ENCODE measurements at regions of chr12 and their contacts with region 1.

Region 1: GRCh38 chr12:110124184-110124995 is at the start of gene IFT81:
- DNase-seq: peak; percentile 98
- ATAC-seq: peak; percentile 91
- H3K4me3 Mint-ChIP-seq: peak within 1 kb of the TSS; percentile 83
- H3K27ac Mint-ChIP-seq: peak within 1 kb of the TSS; percentile 81
- H3K4me1 Mint-ChIP-seq: peaks cover 7% of the 10 kb centered on the region
- H3K27me3 Mint-ChIP-seq: peaks cover 4% of the 10 kb centered on the region
- total RNA-seq, gene IFT81: 3.5 TPM

Region 2: DNA sequence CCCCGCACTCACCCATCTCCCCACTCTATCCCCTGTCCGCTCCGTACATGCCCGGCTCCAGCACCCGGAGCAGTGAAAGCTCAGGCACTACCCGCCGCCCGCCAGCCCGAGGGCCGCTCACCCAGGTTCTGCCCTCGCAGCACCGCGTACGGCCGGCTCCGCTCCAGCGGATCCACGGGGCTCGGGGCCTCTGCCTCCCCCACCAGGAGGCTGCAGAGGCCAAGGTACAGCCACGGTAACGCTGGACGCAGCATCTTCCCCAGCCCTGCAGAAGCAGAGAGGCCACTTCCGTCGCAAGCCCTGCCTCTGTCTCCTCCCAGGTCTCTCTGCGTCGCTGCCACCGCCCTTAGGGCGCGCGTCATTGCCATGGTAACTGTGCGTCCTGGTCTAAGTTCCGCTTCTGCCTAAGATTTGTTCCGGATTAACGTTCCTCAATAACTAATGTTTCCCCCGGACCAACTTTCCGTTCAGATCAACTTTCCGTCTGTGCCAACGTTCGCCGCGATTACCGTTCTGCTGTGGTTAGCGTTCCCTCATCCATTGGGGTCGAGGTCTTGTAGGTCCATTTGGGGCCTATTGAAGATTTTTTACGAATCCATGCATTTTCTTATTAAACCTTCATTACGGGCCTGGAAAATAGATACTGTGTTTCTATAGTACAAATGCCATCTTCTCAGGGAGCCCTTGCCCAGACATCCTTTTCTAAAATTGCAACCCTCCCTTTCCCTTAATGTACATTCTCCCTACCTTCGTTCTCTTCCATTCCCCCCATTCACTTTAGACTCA is 76.0 kb before region 1 on chr12 and contains the start of gene C12orf76:
- CTCF ChIA-PET with region 1: no interaction called
- POLR2A ChIA-PET with region 1: no interaction called
- intact Hi-C with region 1: loop called in 1 of 2 experiments (anchors 1 kb)
- DNase-seq: peak; percentile 95
- ATAC-seq: peak; percentile 100
- H3K4me3 Mint-ChIP-seq: peak within 1 kb of the TSS; percentile 78
- H3K27ac Mint-ChIP-seq: peak within 1 kb of the TSS; percentile 94
- H3K4me1 Mint-ChIP-seq: peaks cover 28% of the 10 kb centered on the region
- H3K27me3 Mint-ChIP-seq: no peaks in the 10 kb centered on the region
- total RNA-seq, gene C12orf76: 10.2 to 10.5 TPM

Region 3: DNA sequence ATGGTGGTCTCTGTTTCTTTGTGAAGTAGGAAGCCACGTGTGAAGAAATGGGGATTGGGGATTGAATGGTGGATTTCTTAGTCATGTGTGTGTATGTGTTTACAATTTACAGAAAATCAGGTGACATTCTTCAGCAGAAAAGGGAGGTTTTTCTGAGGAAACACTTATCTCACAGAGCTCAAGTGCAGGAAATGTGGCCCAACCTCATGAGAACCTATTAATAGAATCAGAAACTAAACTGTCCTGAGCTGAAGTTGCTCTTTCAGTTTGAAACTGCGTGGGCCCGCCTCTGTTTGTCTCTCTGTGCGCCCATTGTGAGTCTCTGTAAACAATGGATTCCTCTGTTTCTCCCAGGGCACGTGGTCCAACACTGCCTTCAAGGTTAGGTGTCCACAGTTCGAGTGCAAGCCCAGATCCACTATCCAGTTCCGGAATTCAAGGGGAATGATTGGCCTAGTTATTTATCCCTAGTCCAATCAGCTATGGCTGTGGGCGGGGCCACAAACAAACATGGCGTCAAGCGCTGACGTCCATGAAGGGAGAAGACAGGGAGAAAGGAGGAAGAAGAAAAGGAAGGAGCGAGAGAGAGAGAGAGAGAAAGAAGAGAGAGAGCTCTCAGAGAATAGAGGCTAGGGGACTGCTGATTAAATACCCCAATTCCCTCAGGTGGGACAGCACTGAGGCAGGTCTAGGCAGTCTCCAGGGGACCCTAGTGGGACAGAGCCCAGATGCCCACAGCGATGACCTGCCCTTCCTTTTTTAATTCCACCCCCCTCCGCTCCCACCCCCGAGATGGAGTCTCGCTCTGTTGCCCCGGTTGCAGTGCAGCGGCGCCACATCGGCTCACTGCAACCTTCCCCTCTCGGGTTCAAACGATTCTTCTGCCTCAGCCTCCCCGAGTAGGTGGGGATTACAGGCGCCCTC is 44.7 kb before region 1 on chr12:
- CTCF ChIA-PET with region 1: no interaction called
- POLR2A ChIA-PET with region 1: interaction called, 3 read pairs
- intact Hi-C with region 1: loop called in 1 of 2 experiments (anchors 2 kb)
- DNase-seq: peak; percentile 83
- ATAC-seq: peak; percentile 91
- H3K4me3 Mint-ChIP-seq: peak overlapping the region; percentile 57
- H3K27ac Mint-ChIP-seq: peak overlapping the region; percentile 94
- H3K4me1 Mint-ChIP-seq: peaks cover 30% of the 10 kb centered on the region
- H3K27me3 Mint-ChIP-seq: no peaks in the 10 kb centered on the region

Region 4: DNA sequence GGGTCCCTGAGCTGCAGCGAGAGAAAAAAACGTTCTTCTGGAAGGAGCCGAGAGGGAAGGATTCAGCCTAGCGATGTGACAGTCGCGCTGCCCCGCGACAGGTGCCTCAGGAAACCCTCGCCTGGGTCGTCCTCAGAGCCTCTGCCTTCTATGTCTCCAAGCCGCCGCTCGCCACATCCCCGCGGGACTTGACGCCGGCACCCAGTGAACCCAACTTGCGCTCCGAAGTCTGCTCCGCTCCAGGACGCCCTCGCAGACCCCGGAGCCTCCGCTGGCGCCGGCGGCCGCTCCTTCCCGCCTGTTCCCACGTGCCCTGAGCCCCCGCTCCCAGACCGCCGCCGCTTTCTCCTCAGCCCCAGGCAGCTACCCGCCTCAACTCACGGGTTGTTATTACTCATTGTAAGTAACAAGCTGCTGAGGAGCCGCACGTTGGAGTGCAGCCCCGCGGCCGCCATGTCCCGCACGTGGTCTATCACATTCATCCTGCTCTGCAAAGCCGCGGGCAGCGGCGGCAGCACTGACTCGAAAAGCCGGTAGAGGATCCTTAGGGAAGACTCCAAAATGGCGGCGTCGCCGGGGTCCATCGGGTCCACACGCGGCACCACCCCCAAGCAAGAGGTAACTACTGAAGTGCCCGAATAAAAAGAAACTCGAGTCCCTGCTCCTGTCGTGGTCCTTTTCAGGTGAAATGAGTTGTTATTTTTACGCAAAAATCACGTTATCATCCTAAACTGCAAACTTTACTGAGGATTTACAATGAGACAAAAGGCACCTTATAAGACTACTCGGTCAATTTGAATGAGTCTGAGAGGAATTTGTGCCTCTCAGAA is 279.0 kb after region 1 on chr12 and contains the start of gene ANAPC7:
- CTCF ChIA-PET with region 1: no interaction called
- POLR2A ChIA-PET with region 1: no interaction called
- intact Hi-C with region 1: loop called in 1 of 2 experiments (anchors 1 kb)
- DNase-seq: peak; percentile 93
- ATAC-seq: peak; percentile 94
- H3K4me3 Mint-ChIP-seq: peak within 1 kb of the TSS; percentile 88
- H3K27ac Mint-ChIP-seq: peak within 1 kb of the TSS; percentile 99
- H3K4me1 Mint-ChIP-seq: peaks cover 21% of the 10 kb centered on the region
- H3K27me3 Mint-ChIP-seq: no peaks in the 10 kb centered on the region
- total RNA-seq, gene ANAPC7: 52.6 to 63.6 TPM

Region 5: GRCh38 chr12:110583137-110584059 is 459.0 kb after region 1 on chr12 and contains the start of gene PPTC7:
- CTCF ChIA-PET with region 1: no interaction called
- POLR2A ChIA-PET with region 1: no interaction called
- intact Hi-C with region 1: loop called in 1 of 2 experiments (anchors 1 kb)
- DNase-seq: peak; percentile 99
- ATAC-seq: peak; percentile 86
- H3K4me3 Mint-ChIP-seq: peak within 1 kb of the TSS; percentile 91
- H3K27ac Mint-ChIP-seq: peak within 1 kb of the TSS; percentile 99
- H3K4me1 Mint-ChIP-seq: peaks cover 59% of the 10 kb centered on the region
- H3K27me3 Mint-ChIP-seq: no peaks in the 10 kb centered on the region
- total RNA-seq, gene PPTC7: 33.4 to 36.5 TPM

Region 6: GRCh38 chr12:110613771-110614684 is 489.6 kb after region 1 on chr12 and contains the start of gene TCTN1:
- CTCF ChIA-PET with region 1: no interaction called
- POLR2A ChIA-PET with region 1: no interaction called
- intact Hi-C with region 1: loop called in 1 of 2 experiments (anchors 2 kb)
- DNase-seq: peak; percentile 99
- ATAC-seq: peak; percentile 99
- H3K4me3 Mint-ChIP-seq: peak within 1 kb of the TSS; percentile 78
- H3K27ac Mint-ChIP-seq: peak within 1 kb of the TSS; percentile 67
- H3K4me1 Mint-ChIP-seq: peaks cover 12% of the 10 kb centered on the region
- H3K27me3 Mint-ChIP-seq: no peaks in the 10 kb centered on the region
- total RNA-seq, gene TCTN1: 7.2 to 7.3 TPM

Region 7: DNA sequence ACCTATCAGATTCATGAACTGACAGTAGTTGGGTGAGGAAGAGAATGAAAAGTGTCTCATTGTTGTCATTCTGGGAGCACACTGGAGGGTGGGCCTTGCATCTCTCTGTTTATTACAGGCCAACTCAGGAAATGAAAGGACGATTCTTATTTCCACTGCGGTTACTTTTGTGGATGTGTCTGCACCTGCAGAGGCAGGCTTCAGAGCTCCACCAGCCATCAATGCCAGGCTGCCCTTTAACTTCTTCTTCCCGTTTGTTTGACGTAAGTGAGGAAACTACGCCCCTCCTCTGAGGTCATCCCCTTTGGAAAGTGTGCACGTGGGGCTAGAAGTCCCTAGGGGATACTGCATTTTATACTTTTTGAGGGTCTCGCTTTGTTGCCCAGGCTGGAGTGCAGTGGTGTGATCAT is 523.2 kb after region 1 on chr12:
- CTCF ChIA-PET with region 1: no interaction called
- POLR2A ChIA-PET with region 1: no interaction called
- intact Hi-C with region 1: no loop called
- DNase-seq: peak; percentile 33
- ATAC-seq: peak; percentile 91
- H3K4me3 Mint-ChIP-seq: no peak overlapping the region
- H3K27ac Mint-ChIP-seq: peak overlapping the region; percentile 75
- H3K4me1 Mint-ChIP-seq: peaks cover 34% of the 10 kb centered on the region
- H3K27me3 Mint-ChIP-seq: no peaks in the 10 kb centered on the region